Activated B cell treated with CpG ODN at 0.5 μM for 24 hours (primary cell): ENCODE measurements at regions of chr5 and their contacts with region 1.

Region 1: GRCh38 chr5:59810041-59810440 is 83.5 kb downstream of the PDE4D start:
- DNase-seq: peak; percentile 48
- ATAC-seq: peak; percentile 73
- H3K4me3 Mint-ChIP-seq: peak overlapping the region; percentile 64
- H3K27ac Mint-ChIP-seq: no peak overlapping the region
- H3K4me1 Mint-ChIP-seq: peaks cover 10% of the 10 kb centered on the region
- H3K27me3 Mint-ChIP-seq: peaks cover 4% of the 10 kb centered on the region
- CTCF ChIP-seq: peak; percentile 25

Region 2: GRCh38 chr5:58972301-58972700 is 837.7 kb before region 1 on chr5:
- CTCF ChIA-PET with region 1: no interaction called
- POLR2A ChIA-PET with region 1: no interaction called
- intact Hi-C with region 1: no loop called
- DNase-seq: no peak
- ATAC-seq: peak; percentile 34
- H3K4me3 Mint-ChIP-seq: no peak overlapping the region
- H3K27ac Mint-ChIP-seq: no peak overlapping the region
- H3K4me1 Mint-ChIP-seq: no peaks in the 10 kb centered on the region
- H3K27me3 Mint-ChIP-seq: no peaks in the 10 kb centered on the region
- CTCF ChIP-seq: no peak

Region 3: GRCh38 chr5:60287174-60287771 is 477.2 kb after region 1 on chr5:
- CTCF ChIA-PET with region 1: interaction called, 12 read pairs
- POLR2A ChIA-PET with region 1: no interaction called
- intact Hi-C with region 1: loop called (anchors 1 kb)
- DNase-seq: no peak
- ATAC-seq: peak; percentile 60
- H3K4me3 Mint-ChIP-seq: no peak overlapping the region
- H3K27ac Mint-ChIP-seq: no peak overlapping the region
- H3K4me1 Mint-ChIP-seq: no peaks in the 10 kb centered on the region
- H3K27me3 Mint-ChIP-seq: peaks cover 6% of the 10 kb centered on the region
- CTCF ChIP-seq: no peak

Region 4: DNA sequence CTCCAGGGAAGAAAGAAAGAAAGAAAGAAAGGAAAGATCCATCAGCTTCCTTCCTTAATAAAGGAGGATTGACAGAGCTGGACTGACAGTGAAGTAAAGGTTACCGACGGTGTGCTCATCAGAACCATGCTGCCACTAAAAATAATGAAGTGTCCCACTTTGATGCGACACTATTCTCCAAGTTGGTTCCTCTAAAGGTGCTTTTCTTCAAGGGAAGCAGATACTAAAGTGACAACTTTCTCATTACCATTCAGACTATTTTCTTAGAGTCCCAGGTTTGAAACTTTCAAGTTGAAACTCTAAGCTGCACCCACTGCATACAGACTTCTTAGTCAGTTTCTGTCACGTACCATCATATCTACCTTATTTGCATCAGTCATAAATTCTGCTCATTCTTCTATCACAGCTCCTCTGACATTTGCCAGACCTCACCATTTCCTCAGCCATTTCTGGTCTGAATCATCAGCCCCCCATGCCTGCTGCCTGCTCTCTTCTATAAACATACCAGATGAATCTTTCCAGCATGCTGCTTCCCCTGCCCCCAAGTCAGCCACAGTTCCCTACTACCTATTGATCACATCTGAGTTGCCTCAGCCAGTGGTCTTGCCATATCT is 712.4 kb after region 1 on chr5:
- CTCF ChIA-PET with region 1: no interaction called
- POLR2A ChIA-PET with region 1: no interaction called
- intact Hi-C with region 1: loop called (anchors 5 kb)
- DNase-seq: no peak
- ATAC-seq: peak; percentile 78
- H3K4me3 Mint-ChIP-seq: no peak overlapping the region
- H3K27ac Mint-ChIP-seq: no peak overlapping the region
- H3K4me1 Mint-ChIP-seq: peaks cover 38% of the 10 kb centered on the region
- H3K27me3 Mint-ChIP-seq: no peaks in the 10 kb centered on the region
- CTCF ChIP-seq: no peak

Region 5: GRCh38 chr5:60649283-60649917 is 839.4 kb after region 1 on chr5:
- CTCF ChIA-PET with region 1: interaction called, 12 read pairs
- POLR2A ChIA-PET with region 1: no interaction called
- intact Hi-C with region 1: loop called (anchors 1 kb)
- DNase-seq: no peak
- ATAC-seq: no peak
- H3K4me3 Mint-ChIP-seq: no peak overlapping the region
- H3K27ac Mint-ChIP-seq: no peak overlapping the region
- H3K4me1 Mint-ChIP-seq: no peaks in the 10 kb centered on the region
- H3K27me3 Mint-ChIP-seq: no peaks in the 10 kb centered on the region
- CTCF ChIP-seq: peak; percentile 28

Region 6: GRCh38 chr5:60960591-60960990 is 1150.5 kb after region 1 on chr5:
- CTCF ChIA-PET with region 1: no interaction called
- POLR2A ChIA-PET with region 1: no interaction called
- intact Hi-C with region 1: loop called (anchors 5 kb)
- DNase-seq: no peak
- ATAC-seq: no peak
- H3K4me3 Mint-ChIP-seq: no peak overlapping the region
- H3K27ac Mint-ChIP-seq: no peak overlapping the region
- H3K4me1 Mint-ChIP-seq: peaks cover 2% of the 10 kb centered on the region
- H3K27me3 Mint-ChIP-seq: no peaks in the 10 kb centered on the region
- CTCF ChIP-seq: no peak